ENCODE measurements at regions of chr17 and their contacts with region 1.

Region 1: GRCh38 chr17:27805520-27806146 is 5.3 kb upstream of the NOS2 start:
- H3K4me3 ChIP-seq: peak overlapping the region; percentile 5
- H3K27ac ChIP-seq: no peak overlapping the region
- H3K4me1 ChIP-seq: no peaks in the 10 kb centered on the region
- CTCF ChIP-seq: peak; percentile 74; the same call in 1 of the 2 replicates

Region 2: GRCh38 chr17:27793168-27793905 is 12.3 kb before region 1 on chr17:
- CTCF ChIA-PET with region 1: interaction called, 34 read pairs
- POLR2A ChIA-PET with region 1: interaction called, 4 read pairs
- H3K4me3 ChIP-seq: peak overlapping the region; percentile 9
- H3K27ac ChIP-seq: peak overlapping the region; percentile 28; the same call in 1 of the 2 replicates
- H3K4me1 ChIP-seq: peaks cover 11% of the 10 kb centered on the region; the same call in 1 of the 2 replicates
- CTCF ChIP-seq: no peak

Region 3: DNA sequence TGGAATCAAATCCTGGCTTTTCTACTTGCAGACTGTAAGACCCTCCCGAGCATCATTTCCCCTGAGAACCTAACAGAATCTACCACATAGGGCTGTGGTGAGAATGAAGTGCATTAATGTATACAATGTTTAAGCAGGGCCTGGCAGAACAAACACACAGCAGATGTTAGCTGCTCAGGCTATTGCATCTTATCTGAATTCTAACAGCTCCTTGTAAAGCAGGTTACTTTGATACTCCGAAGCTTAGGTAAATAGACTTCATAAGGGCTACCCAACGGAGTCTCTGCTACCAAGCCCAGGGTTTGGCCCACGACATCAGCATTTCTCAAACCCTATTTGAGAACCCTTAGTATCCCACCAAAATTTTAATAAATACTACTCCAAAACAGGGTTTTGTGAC is 19.1 kb after region 1 on chr17:
- CTCF ChIA-PET with region 1: interaction called, 23 read pairs
- POLR2A ChIA-PET with region 1: no interaction called
- H3K4me3 ChIP-seq: no peak overlapping the region
- H3K27ac ChIP-seq: no peak overlapping the region
- H3K4me1 ChIP-seq: no peaks in the 10 kb centered on the region
- CTCF ChIP-seq: no peak

Region 4: DNA sequence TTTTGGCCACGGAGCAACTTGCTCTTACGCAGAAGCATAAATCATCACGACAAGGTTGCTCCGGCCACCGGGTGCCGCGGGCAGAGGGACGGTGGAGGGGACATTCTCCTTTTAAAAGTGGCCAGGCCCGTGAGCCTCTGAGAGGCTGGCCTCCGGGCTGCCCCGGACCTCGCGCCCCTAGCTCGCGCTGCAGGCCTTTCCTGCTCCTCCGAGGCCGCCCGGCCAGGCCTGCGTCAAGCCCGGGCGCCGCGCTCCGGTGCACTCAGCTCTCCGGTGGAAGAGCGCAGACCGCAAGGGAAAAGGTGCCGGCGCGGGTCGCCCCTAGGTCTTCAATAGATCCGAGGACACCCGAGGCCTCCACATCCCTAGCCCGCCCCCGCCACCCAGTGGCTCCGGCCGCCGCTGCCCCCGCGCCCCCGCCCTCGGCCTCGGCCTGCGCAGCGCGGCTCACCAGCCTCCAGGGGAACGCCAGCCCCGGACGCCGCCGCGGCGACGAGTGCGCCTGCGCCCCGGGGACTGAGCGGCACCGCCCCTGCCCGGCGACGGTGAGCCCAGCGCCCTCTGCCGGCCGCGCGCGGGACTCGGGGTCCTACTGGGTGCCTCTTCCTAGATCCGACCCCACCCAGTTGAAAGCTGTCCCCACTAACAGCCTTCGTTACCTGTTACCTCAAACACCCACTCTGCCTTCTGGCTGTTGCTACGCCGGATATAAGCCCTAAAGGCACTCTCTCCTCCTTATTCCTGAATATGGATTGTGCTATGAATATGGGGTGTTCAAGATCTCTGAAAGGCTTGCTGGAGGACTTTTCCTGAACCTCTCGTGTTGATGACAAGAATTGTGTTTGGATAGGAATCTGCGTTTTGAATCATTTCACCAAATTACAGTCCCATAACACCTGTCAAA is 87.5 kb after region 1 on chr17 and contains the start of gene LYRM9:
- CTCF ChIA-PET with region 1: interaction called, 32 read pairs
- POLR2A ChIA-PET with region 1: interaction called, 3 read pairs
- H3K4me3 ChIP-seq: peak within 1 kb of the TSS; percentile 63
- H3K27ac ChIP-seq: peak within 1 kb of the TSS; percentile 77; the same call in 1 of the 2 replicates
- H3K4me1 ChIP-seq: no peaks in the 10 kb centered on the region
- CTCF ChIP-seq: peak; percentile 68; the same call in 1 of the 2 replicates

Measured in HEK293 (cell line).